Activated CD4-positive, alpha-beta T cell treated with anti-CD3 and anti-CD28 coated beads for 36 hours (primary cell): ENCODE measurements at regions of chr11 and their contacts with region 1.

Region 1: DNA sequence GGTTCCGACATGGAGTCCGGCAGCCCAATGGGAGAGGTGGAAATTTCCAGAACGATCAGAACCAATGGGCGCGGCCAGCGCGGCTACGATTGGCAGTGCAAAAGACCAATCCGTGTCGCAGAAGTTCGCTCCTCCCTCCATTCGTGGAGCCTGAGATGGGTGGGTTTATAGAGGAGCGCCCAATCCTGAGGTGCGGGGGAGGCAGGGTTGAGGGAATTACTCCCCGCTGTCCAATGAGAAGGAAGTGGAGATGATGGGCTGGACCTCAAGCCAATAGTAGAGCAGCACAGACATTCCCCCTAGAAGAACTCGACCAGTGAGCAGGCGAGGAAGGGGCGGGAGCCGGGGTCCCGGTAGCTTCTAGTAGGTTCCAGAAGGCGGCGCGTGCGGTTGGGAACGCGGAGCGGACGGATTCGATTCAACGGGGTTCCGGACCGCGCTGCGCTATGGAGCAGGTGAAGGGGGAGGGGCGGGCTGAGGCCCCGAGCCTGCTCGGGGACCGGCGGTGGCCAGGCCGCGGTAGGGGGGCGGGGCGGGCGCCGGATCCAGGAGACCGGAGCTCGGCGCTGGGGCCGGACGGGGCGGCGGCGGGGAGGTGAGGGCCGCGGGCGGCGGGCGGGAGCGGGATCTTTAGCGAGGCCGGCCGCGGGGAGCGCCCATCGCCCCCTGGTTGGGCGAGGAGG is at the start of gene STIP1:
- DNase-seq: peak; percentile 99
- ATAC-seq: peak; percentile 92
- H3K4me3 Mint-ChIP-seq: no peak within 1 kb of the TSS
- H3K27ac Mint-ChIP-seq: peak within 1 kb of the TSS; percentile 92
- H3K4me1 Mint-ChIP-seq: peaks cover 42% of the 10 kb centered on the region
- H3K27me3 Mint-ChIP-seq: no peaks in the 10 kb centered on the region
- total RNA-seq, gene STIP1: 398 to 403 TPM

Region 2: GRCh38 chr11:63681321-63682049 is 504.5 kb before region 1 on chr11 and contains the start of gene RTN3:
- CTCF ChIA-PET with region 1: no interaction called
- POLR2A ChIA-PET with region 1: interaction called, 4 read pairs
- intact Hi-C with region 1: loop called in 1 of 2 experiments (anchors 2 kb)
- DNase-seq: peak; percentile 99
- ATAC-seq: peak; percentile 94
- H3K4me3 Mint-ChIP-seq: peak within 1 kb of the TSS; percentile 90
- H3K27ac Mint-ChIP-seq: peak within 1 kb of the TSS; percentile 89
- H3K4me1 Mint-ChIP-seq: peaks cover 20% of the 10 kb centered on the region
- H3K27me3 Mint-ChIP-seq: no peaks in the 10 kb centered on the region
- total RNA-seq, gene RTN3: 42.2 to 43.0 TPM

Region 3: DNA sequence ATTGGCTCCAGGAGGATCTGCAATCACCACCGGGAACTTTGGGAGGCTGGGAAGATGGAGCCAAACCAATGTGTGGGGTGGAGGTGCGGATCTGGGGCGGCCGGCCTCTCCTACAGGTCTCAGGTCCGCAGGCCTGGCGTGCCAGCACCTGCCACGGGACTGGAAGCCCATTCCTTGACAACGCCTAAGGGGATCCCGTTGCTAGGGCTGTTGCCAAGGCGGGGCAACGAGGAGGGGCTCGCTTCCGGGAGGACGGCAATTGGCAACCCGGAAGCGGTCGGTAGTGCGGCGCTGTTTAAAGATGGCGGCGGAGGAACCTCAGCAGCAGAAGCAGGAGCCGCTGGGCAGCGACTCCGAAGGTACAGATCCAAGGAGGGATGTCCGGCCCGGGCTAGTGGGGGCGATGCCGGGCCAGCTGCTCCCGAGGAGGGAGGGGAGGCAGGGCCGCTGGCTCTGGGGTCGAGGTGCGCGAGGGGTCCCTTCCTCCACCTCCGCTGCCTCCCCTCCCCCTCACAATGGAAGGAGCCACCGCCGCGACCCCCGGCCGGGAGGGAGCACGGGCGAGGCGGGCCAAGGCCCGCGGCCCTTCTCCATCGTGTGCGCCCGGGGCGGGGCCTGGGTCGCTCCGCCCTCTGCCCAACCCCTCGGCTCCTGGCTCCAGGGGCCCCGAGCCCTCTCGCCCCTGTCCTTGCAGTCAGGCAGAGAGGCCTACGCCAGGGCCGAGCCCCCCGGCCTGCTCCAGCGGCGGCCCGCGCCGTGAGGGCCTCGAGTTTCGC is 199.6 kb before region 1 on chr11 and contains the start of gene OTUB1:
- CTCF ChIA-PET with region 1: no interaction called
- POLR2A ChIA-PET with region 1: no interaction called
- intact Hi-C with region 1: loop called in 1 of 2 experiments (anchors 1 kb)
- DNase-seq: peak; percentile 94
- ATAC-seq: peak; percentile 92
- H3K4me3 Mint-ChIP-seq: peak within 1 kb of the TSS; percentile 93
- H3K27ac Mint-ChIP-seq: peak within 1 kb of the TSS; percentile 89
- H3K4me1 Mint-ChIP-seq: peaks cover 23% of the 10 kb centered on the region
- H3K27me3 Mint-ChIP-seq: no peaks in the 10 kb centered on the region
- total RNA-seq, gene OTUB1: 77.4 to 86.1 TPM

Region 4: DNA sequence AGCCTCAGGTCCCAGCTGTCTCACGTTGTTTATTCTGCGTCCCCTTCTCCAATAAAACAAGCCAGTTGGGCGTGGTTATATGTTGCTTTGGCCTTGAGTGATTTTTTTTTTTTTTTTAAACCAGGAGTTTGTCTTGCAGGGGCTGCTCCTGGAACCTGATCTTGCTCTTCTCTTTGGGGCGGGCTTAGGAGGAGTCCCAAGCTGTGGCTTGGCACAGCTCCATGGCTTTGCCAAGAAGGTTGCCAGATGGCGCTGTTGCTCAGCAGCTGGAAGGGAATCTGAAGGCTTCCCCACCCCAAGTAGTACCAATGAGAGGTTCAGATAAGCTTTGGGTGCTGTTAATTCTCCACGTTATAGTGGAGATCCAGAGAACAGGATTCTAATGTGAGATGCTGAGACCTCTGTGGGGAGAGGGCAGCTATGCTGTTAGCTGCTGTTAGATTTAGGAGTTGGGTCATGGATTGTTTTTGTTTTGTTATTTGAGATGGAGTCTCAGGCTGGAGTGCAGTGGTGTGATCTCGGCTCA is 18.6 kb after region 1 on chr11:
- CTCF ChIA-PET with region 1: interaction called, 40 read pairs
- POLR2A ChIA-PET with region 1: interaction called, 24 read pairs
- intact Hi-C with region 1: loop called (anchors 1 kb)
- DNase-seq: peak; percentile 90
- ATAC-seq: peak; percentile 30
- H3K4me3 Mint-ChIP-seq: peak overlapping the region; percentile 33
- H3K27ac Mint-ChIP-seq: peak overlapping the region; percentile 79
- H3K4me1 Mint-ChIP-seq: peaks cover 41% of the 10 kb centered on the region
- H3K27me3 Mint-ChIP-seq: no peaks in the 10 kb centered on the region

Region 5: DNA sequence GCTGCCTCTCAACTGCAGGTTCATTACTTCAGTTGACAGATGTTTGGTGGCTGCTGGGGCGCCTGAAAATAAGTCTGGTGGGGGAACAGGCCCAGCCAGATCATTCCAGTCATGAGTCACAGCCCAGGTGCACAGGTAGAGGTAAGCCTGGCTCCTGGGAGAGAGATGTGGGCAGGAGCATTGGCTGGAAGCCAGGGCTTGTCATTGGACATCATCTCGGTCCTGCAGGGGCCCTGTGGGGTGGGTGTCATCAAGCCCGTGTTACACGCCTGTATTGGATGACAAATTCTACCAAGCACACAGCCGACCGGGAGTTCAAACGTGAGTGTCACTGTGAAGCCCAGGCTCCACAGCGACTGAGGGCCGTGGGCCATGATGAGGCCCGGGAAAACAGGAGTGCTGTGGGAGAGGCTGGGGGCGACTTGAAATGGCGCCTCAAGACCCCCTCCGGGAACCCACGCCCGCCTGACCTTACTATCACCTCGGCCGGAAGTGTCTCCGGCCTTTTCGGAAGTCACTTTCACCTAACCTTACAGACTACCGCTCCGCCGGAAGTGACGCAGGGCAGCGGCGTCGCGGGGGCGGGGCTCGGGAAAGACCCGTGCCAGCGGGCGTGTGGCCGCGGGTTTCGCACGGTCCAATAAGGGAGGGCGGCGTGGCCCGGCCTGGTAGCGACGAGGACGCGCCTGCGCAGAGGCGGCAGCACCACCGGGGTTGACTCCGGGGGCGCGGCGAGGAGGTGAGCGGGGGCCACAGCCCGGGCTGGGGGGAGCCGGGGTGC is 54.6 kb after region 1 on chr11 and contains the start of gene FKBP2:
- CTCF ChIA-PET with region 1: interaction called, 3 read pairs
- POLR2A ChIA-PET with region 1: interaction called, 3 read pairs
- intact Hi-C with region 1: loop called in 1 of 2 experiments (anchors 1 kb)
- DNase-seq: peak; percentile 99
- ATAC-seq: peak; percentile 68
- H3K4me3 Mint-ChIP-seq: peak within 1 kb of the TSS; percentile 86
- H3K27ac Mint-ChIP-seq: peak within 1 kb of the TSS; percentile 99
- H3K4me1 Mint-ChIP-seq: peaks cover 31% of the 10 kb centered on the region
- H3K27me3 Mint-ChIP-seq: no peaks in the 10 kb centered on the region
- total RNA-seq, gene FKBP2: 19.9 to 21.3 TPM

Region 6: GRCh38 chr11:64269380-64270234 is 83.7 kb after region 1 on chr11:
- CTCF ChIA-PET with region 1: no interaction called
- POLR2A ChIA-PET with region 1: interaction called, 6 read pairs
- intact Hi-C with region 1: loop called (anchors 1 kb)
- DNase-seq: peak; percentile 98
- ATAC-seq: peak; percentile 82
- H3K4me3 Mint-ChIP-seq: peak overlapping the region; percentile 98
- H3K27ac Mint-ChIP-seq: peak overlapping the region; percentile 96
- H3K4me1 Mint-ChIP-seq: peaks cover 19% of the 10 kb centered on the region
- H3K27me3 Mint-ChIP-seq: no peaks in the 10 kb centered on the region